ENCODE measurements at regions of chr7 and their contacts with region 1.

Region 1: DNA sequence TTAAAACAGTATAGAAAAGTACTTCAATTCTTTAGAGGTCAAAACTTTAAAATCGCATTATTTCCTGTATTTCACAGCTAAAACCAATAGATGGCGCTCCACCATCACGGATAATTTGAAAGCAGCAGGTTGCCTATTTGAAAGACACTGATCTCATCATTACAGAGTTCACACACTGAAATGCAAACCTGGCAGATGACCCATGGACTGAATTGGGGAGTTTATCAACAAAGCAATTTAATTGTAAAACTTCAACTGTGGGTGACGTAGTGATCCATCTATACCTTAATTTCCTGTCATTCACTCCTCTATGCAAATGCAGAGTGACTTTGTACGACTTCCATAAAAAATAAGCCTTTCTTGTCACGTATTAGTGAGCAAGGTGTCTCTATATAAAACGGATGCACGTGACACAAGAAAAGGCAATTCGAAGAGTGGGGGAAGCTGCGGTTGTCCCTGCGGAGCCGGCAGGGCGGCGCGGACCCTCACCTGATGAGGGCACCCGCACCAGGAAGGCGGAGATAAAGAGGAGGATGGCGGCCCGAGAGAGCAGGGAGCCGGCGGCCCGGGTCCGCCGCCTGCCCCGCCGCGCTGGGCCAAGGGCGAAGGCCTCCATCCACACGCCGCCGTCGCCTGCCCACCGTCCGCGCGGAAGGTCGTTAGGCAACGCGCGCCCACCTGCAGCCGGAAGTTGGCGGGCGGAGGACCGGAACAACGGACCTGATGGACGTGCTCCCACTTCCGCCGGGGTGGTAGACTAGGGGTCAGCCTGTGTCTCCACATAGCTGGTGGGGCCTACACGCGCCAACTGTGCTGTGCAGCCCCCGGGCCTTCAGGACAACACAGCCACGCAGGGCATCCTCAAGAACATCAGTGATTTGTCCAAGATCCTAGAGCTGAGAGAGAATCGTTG is at the start of gene ZPBP:
- DNase-seq: peak; percentile 67
- H3K4me3 Mint-ChIP-seq: peak within 1 kb of the TSS; percentile 76
- H3K27ac Mint-ChIP-seq: peak within 1 kb of the TSS; percentile 81
- H3K4me1 Mint-ChIP-seq: peaks cover 7% of the 10 kb centered on the region
- H3K27me3 Mint-ChIP-seq: no peaks in the 10 kb centered on the region
- total RNA-seq, gene ZPBP: not detected

Region 2: GRCh38 chr7:49159536-49159935 is 933.3 kb before region 1 on chr7:
- CTCF ChIA-PET with region 1: no interaction called
- intact Hi-C with region 1: no loop called
- DNase-seq: no peak
- H3K4me3 Mint-ChIP-seq: no peak overlapping the region
- H3K27ac Mint-ChIP-seq: no peak overlapping the region
- H3K4me1 Mint-ChIP-seq: no peaks in the 10 kb centered on the region
- H3K27me3 Mint-ChIP-seq: no peaks in the 10 kb centered on the region

Region 3: DNA sequence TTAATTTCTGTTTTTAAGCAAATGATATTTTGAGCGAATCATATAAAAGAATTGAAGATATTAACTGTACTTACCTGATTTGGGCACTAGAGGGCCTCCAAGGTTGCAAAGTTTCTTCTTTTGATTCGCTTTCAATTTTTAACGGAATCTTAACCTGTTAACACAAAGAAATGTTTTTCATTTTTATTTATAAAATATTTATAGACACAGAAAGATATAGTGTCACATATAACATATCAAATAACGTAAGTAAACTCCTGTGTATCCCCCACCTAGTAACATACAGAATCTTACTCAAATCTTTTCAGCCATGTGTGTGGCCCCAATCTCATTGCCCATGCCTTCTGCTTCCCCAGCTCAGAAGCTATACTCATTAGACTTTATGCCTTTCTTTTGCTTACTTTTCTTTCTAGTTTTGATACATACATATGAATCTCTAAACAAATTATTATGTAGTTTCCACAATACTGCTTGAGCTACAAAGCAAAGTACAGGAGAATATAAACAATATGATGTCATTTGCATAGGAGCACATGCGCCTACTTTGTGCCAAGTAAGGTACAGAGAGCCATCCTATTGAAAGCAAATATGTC is 49.7 kb after region 1 on chr7:
- CTCF ChIA-PET with region 1: interaction called, 7 read pairs
- intact Hi-C with region 1: loop called (anchors 1 kb)
- DNase-seq: peak; percentile 64
- H3K4me3 Mint-ChIP-seq: peak overlapping the region; percentile 45
- H3K27ac Mint-ChIP-seq: peak overlapping the region; percentile 82
- H3K4me1 Mint-ChIP-seq: peaks cover 43% of the 10 kb centered on the region
- H3K27me3 Mint-ChIP-seq: no peaks in the 10 kb centered on the region

Region 4: DNA sequence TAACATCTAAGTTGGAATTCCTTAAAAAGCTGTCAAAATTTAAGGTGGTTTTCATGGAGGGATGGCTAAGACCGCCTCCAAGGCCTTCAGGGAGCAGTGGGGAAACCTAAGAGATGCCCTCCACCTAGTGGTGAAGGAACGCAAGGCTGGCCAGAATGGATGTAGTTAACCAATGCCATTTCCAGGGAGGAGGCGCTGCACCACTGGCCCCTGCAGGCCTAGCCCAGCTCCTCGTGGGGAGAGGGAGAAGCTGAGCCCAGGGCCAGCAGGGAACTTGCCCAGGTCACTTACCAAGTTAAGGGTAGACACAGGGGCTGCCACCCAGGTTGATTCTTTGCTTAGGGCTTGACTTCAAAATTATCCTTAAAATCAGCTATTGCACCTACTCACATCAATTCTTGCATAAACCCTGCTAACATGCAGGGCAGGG is 325.3 kb after region 1 on chr7:
- CTCF ChIA-PET with region 1: interaction called, 35 read pairs
- intact Hi-C with region 1: loop called (anchors 1 kb)
- DNase-seq: peak; percentile 92
- H3K4me3 Mint-ChIP-seq: no peak overlapping the region
- H3K27ac Mint-ChIP-seq: no peak overlapping the region
- H3K4me1 Mint-ChIP-seq: peaks cover 24% of the 10 kb centered on the region
- H3K27me3 Mint-ChIP-seq: no peaks in the 10 kb centered on the region

Region 5: DNA sequence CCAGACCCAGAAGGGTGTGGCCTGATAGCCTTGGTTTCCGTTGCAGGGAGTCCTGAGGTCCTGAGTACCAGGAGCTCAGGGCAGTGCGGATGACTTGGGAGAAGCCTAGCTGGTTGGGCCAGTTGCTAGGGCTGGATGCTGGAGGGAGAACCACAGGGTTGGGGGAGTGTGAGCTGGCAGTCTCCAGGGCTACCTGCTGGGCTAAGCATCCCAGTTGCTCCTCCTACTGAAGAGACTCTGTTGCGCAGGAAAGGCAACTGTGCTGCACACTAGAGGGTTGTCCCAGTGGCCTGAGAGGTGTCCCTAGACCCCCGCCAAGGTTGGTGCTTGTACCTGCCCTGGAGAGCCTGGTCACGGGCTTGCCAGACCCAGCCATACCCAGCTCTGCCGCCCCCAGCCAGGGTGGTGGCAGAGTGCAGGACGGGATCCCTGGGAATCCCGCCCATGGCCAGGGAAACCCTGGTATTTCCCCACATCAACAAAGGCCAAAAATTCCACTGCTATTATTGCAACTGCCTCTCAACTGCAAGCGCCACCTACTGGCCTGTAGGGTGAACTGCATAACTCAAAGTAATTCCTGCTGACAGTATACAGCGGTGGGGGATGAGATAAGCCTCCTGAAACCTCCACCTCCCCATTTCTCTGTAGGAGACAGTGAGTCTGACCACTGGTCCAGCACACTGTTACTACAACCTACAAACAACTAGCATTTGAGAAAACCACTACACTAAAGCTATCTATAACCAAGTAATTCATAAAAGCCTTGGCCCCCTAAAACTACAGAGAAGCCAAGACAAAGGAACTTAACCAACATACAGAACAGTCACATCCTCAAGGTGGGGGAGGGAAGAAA is 540.0 kb after region 1 on chr7:
- CTCF ChIA-PET with region 1: interaction called, 11 read pairs
- intact Hi-C with region 1: loop called (anchors 1 kb)
- DNase-seq: peak; percentile 70
- H3K4me3 Mint-ChIP-seq: no peak overlapping the region
- H3K27ac Mint-ChIP-seq: no peak overlapping the region
- H3K4me1 Mint-ChIP-seq: no peaks in the 10 kb centered on the region
- H3K27me3 Mint-ChIP-seq: peaks cover 2% of the 10 kb centered on the region

Region 6: DNA sequence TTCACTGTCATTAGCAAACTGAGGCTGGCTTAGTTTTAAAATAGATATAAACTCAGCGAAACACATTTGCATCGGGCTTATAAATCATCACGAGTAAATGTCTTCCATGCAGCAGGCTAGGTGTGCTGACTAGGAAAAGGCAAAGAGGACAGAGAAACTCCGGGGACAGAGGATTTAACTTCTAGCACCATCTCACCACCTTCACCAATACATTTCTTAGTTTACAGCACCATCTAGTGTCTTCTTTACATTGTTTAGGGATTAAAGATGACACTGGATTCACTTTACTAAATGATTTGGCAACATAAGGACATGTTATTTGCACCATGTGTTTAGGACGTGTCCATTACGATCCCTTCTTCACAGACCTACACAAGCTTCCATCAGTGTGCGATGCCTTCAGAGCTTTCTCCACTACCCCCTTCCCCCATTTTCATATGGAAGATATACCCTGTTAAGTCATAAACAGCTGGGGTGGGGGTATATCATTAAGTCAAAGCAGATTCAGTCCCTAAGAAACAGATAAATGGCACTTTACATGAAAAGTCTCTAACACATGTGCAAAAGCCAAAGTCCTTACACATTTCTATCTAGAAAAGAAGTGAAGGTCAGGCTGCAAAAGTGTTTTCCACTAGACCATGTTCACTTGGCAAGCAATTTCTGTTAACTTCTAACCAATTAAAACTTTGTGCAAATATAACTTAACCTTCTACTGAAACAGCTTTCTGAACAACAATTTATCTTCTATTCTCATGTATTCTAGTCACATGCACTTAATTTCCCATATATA is 586.6 kb after region 1 on chr7:
- CTCF ChIA-PET with region 1: no interaction called
- intact Hi-C with region 1: loop called (anchors 1 kb)
- DNase-seq: no peak
- H3K4me3 Mint-ChIP-seq: no peak overlapping the region
- H3K27ac Mint-ChIP-seq: no peak overlapping the region
- H3K4me1 Mint-ChIP-seq: no peaks in the 10 kb centered on the region
- H3K27me3 Mint-ChIP-seq: no peaks in the 10 kb centered on the region

Region 7: GRCh38 chr7:51141451-51142003 is 1048.7 kb after region 1 on chr7:
- CTCF ChIA-PET with region 1: interaction called, 5 read pairs
- intact Hi-C with region 1: loop called (anchors 1 kb)
- DNase-seq: peak; percentile 31
- H3K4me3 Mint-ChIP-seq: no peak overlapping the region
- H3K27ac Mint-ChIP-seq: no peak overlapping the region
- H3K4me1 Mint-ChIP-seq: peaks cover 14% of the 10 kb centered on the region
- H3K27me3 Mint-ChIP-seq: no peaks in the 10 kb centered on the region

Region 8: DNA sequence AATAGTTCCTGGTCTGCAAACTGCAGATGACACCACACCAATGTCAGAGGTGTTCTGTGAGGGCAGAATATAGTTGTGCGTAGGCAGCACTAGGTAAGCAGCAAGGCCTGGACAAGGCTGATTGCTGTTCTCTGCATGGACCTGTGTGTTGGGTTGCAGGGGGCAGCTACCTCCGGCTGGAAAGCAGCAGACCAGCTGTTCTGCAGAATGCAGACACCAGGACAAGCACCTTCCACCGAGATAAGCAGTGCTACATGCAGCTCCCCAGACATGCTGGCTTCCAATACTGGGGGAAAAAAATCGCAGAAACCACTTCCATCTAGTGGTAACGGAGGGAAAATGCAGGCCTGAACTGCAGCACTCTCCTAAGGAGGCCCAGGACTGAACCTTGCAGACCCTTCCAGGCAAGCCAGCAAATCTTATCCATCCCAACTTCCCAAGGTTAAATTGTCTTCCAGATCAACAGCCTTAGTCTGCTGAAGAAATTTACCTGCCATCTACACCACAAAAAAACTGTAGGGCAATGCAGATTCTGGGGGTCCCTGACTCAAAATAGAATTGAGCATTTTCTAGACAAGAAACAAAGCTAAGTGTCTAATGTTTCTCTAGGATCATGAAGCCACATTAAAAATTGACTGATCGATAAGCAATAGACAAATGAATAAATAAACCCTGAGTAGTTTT is 1274.2 kb after region 1 on chr7:
- CTCF ChIA-PET with region 1: no interaction called
- intact Hi-C with region 1: loop called (anchors 10 kb)
- DNase-seq: peak; percentile 25
- H3K4me3 Mint-ChIP-seq: no peak overlapping the region
- H3K27ac Mint-ChIP-seq: no peak overlapping the region
- H3K4me1 Mint-ChIP-seq: no peaks in the 10 kb centered on the region
- H3K27me3 Mint-ChIP-seq: no peaks in the 10 kb centered on the region